Activated naive CD4-positive, alpha-beta T cell treated with anti-CD3 and anti-CD28 coated beads for 36 hours (primary cell): ENCODE measurements at regions of chr6 and their contacts with region 1.

Region 1: GRCh38 chr6:139291813-139292619 is at the start of gene TXLNB:
- DNase-seq: peak; percentile 91
- H3K4me3 Mint-ChIP-seq: peak within 1 kb of the TSS; percentile 79
- H3K27ac Mint-ChIP-seq: peak within 1 kb of the TSS; percentile 95
- H3K4me1 Mint-ChIP-seq: peaks cover 67% of the 10 kb centered on the region
- H3K27me3 Mint-ChIP-seq: no peaks in the 10 kb centered on the region
- total RNA-seq, gene TXLNB: 0.10 to 0.14 TPM

Region 2: GRCh38 chr6:138654715-138655634 is 637.0 kb before region 1 on chr6:
- CTCF ChIA-PET with region 1: no interaction called
- intact Hi-C with region 1: loop called (anchors 2 kb)
- DNase-seq: peak; percentile 76
- H3K4me3 Mint-ChIP-seq: no peak overlapping the region
- H3K27ac Mint-ChIP-seq: peak overlapping the region; percentile 36
- H3K4me1 Mint-ChIP-seq: peaks cover 25% of the 10 kb centered on the region
- H3K27me3 Mint-ChIP-seq: peaks cover 28% of the 10 kb centered on the region

Region 3: GRCh38 chr6:139099984-139100383 is 192.0 kb before region 1 on chr6:
- CTCF ChIA-PET with region 1: no interaction called
- intact Hi-C with region 1: loop called (anchors 1 kb)
- DNase-seq: peak; percentile 63
- H3K4me3 Mint-ChIP-seq: no peak overlapping the region
- H3K27ac Mint-ChIP-seq: peak overlapping the region; percentile 66
- H3K4me1 Mint-ChIP-seq: peaks cover 26% of the 10 kb centered on the region
- H3K27me3 Mint-ChIP-seq: no peaks in the 10 kb centered on the region

Region 4: GRCh38 chr6:139153855-139154254 is 138.2 kb before region 1 on chr6:
- CTCF ChIA-PET with region 1: interaction called, 3 read pairs
- intact Hi-C with region 1: loop called (anchors 1 kb)
- DNase-seq: no peak
- H3K4me3 Mint-ChIP-seq: no peak overlapping the region
- H3K27ac Mint-ChIP-seq: peak overlapping the region; percentile 89
- H3K4me1 Mint-ChIP-seq: peaks cover 81% of the 10 kb centered on the region
- H3K27me3 Mint-ChIP-seq: no peaks in the 10 kb centered on the region

Region 5: DNA sequence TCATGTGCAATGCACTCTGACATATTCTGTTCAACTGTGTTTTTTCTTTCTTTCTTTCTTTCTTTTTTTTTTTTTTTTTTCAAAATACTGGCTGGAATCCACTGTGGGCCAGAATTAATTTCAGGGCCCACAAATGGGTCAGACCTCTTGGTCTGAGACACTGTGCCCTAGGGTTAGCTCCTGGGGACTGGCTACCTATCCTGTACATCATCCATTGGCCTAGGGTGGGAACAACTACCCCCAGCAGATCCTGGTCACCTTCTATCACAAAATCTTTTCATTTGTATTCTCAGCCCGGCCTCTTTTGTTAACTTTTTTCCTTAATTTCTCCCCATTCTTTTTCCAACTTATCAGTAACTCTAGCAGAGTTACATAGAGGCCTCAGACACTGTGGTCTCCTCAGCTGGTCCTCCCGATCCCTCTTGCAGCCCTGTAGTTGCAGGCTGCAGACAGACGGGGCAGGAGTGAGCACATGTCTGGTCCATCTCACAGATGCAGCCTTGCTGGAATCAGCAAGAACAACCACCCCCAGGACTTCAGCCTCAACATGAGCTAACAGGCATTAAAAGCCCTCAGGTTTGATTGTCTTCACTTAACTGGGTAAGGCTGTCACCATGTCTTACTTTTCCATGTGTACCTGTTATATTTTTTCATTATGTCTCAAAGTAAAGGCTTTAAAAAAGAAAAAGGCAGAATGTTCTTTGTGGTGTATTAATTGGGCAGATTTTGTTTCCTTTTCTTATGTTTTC is 41.5 kb before region 1 on chr6:
- CTCF ChIA-PET with region 1: no interaction called
- intact Hi-C with region 1: loop called (anchors 1 kb)
- DNase-seq: peak; percentile 66
- H3K4me3 Mint-ChIP-seq: no peak overlapping the region
- H3K27ac Mint-ChIP-seq: peak overlapping the region; percentile 20
- H3K4me1 Mint-ChIP-seq: peaks cover 40% of the 10 kb centered on the region
- H3K27me3 Mint-ChIP-seq: no peaks in the 10 kb centered on the region

Region 6: DNA sequence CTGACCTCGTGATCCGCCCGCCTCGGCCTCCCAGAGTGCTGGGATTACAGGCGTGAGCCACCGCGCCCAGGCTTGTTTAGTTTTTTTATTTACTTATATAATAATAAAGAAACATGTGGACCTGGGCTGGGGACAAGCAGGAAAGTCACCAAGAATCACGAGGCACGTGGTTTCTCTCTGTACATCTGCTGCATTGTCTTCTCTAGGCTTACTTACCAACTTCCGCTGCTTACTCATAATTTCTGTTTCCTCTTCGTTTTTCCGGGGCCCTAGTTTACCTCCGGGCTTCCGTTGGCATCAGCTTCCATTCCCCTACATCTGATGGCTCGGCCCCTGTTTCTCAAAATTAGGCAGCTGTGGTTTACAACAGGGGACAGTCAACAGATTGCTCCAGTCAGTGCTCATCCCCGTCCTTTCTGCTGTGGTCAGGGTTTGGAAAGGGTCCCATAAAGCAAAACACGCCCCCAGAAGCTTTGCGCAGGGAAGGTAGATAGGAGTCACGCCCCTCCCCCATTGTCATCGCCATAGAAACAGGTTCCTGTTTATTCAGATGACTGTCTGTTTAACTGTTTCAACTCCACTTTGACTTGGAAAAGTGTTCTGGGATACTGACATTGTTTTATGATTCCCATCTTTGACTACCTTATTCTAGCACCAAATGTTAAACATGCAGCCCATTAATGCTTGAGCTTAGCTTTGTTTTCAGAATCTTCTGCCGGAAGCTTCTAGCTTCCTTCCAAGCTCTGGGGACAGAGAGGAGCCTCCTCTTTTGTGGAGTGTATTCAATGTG is 31.7 kb after region 1 on chr6:
- CTCF ChIA-PET with region 1: interaction called, 7 read pairs
- intact Hi-C with region 1: loop called (anchors 1 kb)
- DNase-seq: peak; percentile 88
- H3K4me3 Mint-ChIP-seq: peak overlapping the region; percentile 77
- H3K27ac Mint-ChIP-seq: peak overlapping the region; percentile 97
- H3K4me1 Mint-ChIP-seq: peaks cover 31% of the 10 kb centered on the region
- H3K27me3 Mint-ChIP-seq: no peaks in the 10 kb centered on the region